ENCODE measurements at regions of chr4 and their contacts with region 1.

Region 1: GRCh38 chr4:110201502-110201901 is 3.1 kb upstream of the ELOVL6 start:
- DNase-seq: no peak
- CTCF ChIP-seq: no peak

Region 2: DNA sequence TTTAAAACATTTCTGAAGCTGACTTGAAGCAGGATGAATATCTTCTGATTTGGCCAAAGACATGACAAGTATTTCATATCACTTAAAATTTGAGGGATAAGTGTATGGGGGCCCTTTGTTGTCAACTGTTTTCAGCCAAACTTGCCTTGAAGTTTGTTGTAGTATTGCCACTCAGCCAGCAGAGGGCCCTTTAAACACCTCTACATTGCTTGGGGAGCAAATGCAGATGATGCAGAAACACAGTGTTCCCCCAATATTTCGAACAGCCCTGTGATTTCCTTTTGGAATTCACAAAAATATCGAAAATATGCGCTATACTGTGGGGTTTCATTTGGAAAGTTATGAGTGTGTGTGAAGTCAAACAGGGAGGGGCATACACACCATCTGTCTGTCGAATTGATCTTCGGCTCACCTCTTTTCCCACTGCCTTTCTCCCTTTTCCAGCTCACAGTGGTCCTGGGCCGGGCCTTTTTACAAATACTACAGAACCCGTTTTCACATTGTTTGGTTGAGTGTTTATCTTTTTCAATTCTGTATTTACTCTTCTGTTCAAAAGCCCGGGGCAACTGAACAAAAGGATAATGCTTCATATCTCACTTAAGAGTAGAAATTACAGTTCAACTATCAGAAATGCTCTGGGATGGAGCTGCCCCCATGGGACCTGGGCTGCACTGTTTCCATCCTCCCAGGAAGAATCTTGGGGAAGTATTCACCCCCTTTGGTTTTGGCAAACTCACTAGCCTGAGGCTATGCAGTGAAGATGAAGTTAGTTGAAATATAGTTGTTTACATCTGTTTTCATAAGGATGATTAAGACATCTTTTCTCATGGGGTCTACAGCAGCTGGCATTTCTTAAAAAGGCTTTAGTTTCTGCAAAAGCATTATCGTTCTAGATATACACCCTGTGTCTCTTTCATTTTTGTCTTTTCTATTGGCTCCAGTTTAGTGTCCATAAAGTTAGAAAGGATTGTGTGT is 151.3 kb before region 1 on chr4:
- in situ Hi-C with region 1: loop called (anchors 10 kb)
- DNase-seq: peak; percentile 47
- CTCF ChIP-seq: peak; percentile 69

Measured in GM13976 (cell line).